ENCODE measurements at regions of chr6 and their contacts with region 1.

Region 1: GRCh38 chr6:142474531-142475289 is 172.9 kb downstream of the ADGRG6 start:
- DNase-seq: peak; percentile 77
- ATAC-seq: peak; percentile 94
- H3K4me3 ChIP-seq: peak overlapping the region in 1 of 2 experiments; percentile 19; a peak in 1 of 4 replicates
- H3K27ac ChIP-seq: 0 out of 2 replicates have a peak overlapping the region, but pooled peaks have one; percentile 10
- H3K4me1 ChIP-seq: peaks cover 0 to 9% of the 10 kb centered on the region in 2 experiments; a peak in 2 of 4 replicates
- H3K27me3 ChIP-seq: no peaks in the 10 kb centered on the region
- CTCF ChIP-seq: peak; percentile 52 to 89 (median 83)
- POLR2A ChIP-seq: no peak
- RAD21 ChIP-seq: peak; percentile 83

Region 2: GRCh38 chr6:142071981-142072380 is 402.7 kb before region 1 on chr6:
- CTCF ChIA-PET with region 1: no interaction called
- POLR2A ChIA-PET with region 1: no interaction called
- RAD21 ChIA-PET with region 1: no interaction called
- intact Hi-C with region 1: no loop called
- DNase-seq: peak; percentile 22
- ATAC-seq: peak; percentile 87
- H3K4me3 ChIP-seq: no peak overlapping the region
- H3K27ac ChIP-seq: no peak overlapping the region
- H3K4me1 ChIP-seq: no peaks in the 10 kb centered on the region
- H3K27me3 ChIP-seq: no peaks in the 10 kb centered on the region
- CTCF ChIP-seq: peak; percentile 15 to 45 (median 32); a peak in 5 of 6 replicates
- POLR2A ChIP-seq: no peak
- RAD21 ChIP-seq: peak; percentile 30

Region 3: GRCh38 chr6:142146828-142147662 is 327.7 kb before region 1 on chr6 and contains the starts of genes NMBR and VTA1:
- CTCF ChIA-PET with region 1: interaction called, 10 read pairs
- POLR2A ChIA-PET with region 1: no interaction called
- RAD21 ChIA-PET with region 1: no interaction called
- intact Hi-C with region 1: no loop called
- DNase-seq: peak; percentile 99
- ATAC-seq: peak; percentile 99
- H3K4me3 ChIP-seq: peak within 1 kb of the TSS; percentile 83
- H3K27ac ChIP-seq: peak within 1 kb of the TSS; percentile 27; the same call in 1 of the 2 replicates
- H3K4me1 ChIP-seq: peaks cover 7 to 15% of the 10 kb centered on the region in 2 experiments; a peak in 3 of 4 replicates
- H3K27me3 ChIP-seq: no peaks in the 10 kb centered on the region
- CTCF ChIP-seq: peak; percentile 82 to 89 (median 85)
- POLR2A ChIP-seq: peak; percentile 77
- RAD21 ChIP-seq: peak; percentile 91
- total RNA-seq, gene NMBR: not detected
- total RNA-seq, gene VTA1: 67.8 TPM

Region 4: DNA sequence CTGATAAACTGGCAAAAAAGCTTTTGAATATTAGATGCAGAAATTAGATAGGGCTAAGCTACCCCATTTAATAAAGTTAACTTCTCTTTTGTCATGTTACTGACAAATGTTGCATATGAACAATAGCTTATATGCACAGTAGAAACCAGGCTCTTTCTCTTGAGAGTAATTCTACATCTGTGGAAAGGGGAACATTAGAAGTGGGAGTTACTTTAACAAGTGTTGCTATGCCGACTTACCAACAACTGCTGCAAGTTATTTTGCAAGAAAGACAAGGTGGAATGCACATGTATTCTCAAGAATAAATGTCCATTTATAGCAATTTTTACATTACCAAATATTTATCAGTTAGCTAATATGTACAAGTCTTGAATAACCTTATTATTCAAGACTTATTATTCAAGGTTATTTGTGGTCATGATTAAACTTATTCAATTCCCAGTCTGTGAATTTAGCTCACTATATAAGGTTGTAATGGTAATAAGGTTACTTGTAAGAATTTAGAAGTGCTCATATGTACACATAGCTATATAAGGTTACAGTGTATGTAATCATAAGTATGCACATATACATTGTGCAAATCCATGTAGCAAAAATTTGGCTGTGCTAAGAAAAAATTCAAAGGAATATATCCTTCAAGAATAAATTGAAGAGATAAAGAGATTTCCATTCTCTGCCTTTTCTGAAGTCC is 134.6 kb before region 1 on chr6:
- CTCF ChIA-PET with region 1: no interaction called
- POLR2A ChIA-PET with region 1: no interaction called
- RAD21 ChIA-PET with region 1: no interaction called
- intact Hi-C with region 1: no loop called
- DNase-seq: no peak
- ATAC-seq: no peak
- H3K4me3 ChIP-seq: no peak overlapping the region
- H3K27ac ChIP-seq: no peak overlapping the region
- H3K4me1 ChIP-seq: no peaks in the 10 kb centered on the region
- H3K27me3 ChIP-seq: no peaks in the 10 kb centered on the region
- CTCF ChIP-seq: no peak
- POLR2A ChIP-seq: no peak
- RAD21 ChIP-seq: no peak

Region 5: GRCh38 chr6:142500250-142500786 is 25.6 kb after region 1 on chr6:
- CTCF ChIA-PET with region 1: interaction called, 10 read pairs
- POLR2A ChIA-PET with region 1: no interaction called
- RAD21 ChIA-PET with region 1: no interaction called
- intact Hi-C with region 1: no loop called
- DNase-seq: no peak
- ATAC-seq: no peak
- H3K4me3 ChIP-seq: no peak overlapping the region
- H3K27ac ChIP-seq: no peak overlapping the region
- H3K4me1 ChIP-seq: no peaks in the 10 kb centered on the region
- H3K27me3 ChIP-seq: no peaks in the 10 kb centered on the region
- CTCF ChIP-seq: no peak
- POLR2A ChIP-seq: no peak
- RAD21 ChIP-seq: no peak

Region 6: DNA sequence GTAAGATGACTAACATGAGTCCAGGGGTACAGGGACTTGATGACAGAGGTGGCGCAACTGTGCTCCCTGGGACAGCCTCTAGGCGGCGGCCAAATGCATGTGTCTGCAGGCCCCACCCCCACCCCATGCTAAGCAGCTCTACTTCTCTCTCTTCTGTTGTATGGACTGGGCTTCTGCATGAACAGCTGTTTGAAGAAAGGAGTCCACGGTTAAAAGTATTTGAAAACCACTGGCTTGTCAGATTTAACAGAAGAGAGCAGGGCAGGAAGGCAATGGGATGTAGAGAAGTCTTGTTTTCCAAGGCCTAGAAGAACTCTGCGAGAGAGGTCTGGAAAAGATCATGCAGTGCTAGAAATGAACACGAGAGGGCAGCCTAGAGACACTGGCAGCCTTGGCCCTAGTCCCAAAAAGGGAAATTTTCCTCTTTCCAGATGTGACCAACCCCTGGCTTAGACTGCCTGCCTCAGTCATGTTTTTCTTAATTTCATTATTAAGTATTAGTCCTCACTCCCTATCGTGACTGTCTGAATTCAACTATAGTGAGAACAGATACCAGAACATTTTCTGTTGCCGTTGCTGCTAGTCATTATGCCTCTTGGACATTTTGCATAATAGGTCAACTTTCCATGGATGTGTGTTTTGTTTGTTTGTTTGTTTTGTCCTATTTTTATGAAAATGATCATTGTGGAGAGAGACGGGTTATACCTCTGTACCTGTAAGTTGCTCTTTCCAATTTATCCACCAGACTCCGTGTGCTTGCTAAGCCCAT is 92.1 kb after region 1 on chr6:
- CTCF ChIA-PET with region 1: interaction called, 16 read pairs
- POLR2A ChIA-PET with region 1: no interaction called
- RAD21 ChIA-PET with region 1: no interaction called
- intact Hi-C with region 1: loop called (anchors 2 kb)
- DNase-seq: peak; percentile 66
- ATAC-seq: peak; percentile 86
- H3K4me3 ChIP-seq: no peak overlapping the region
- H3K27ac ChIP-seq: no peak overlapping the region
- H3K4me1 ChIP-seq: peaks cover 2 to 21% of the 10 kb centered on the region in 2 experiments; a peak in 3 of 4 replicates
- H3K27me3 ChIP-seq: no peaks in the 10 kb centered on the region
- CTCF ChIP-seq: peak; percentile 78 to 87 (median 81)
- POLR2A ChIP-seq: no peak
- RAD21 ChIP-seq: peak; percentile 76

Region 7: GRCh38 chr6:143026696-143027449 is 552.2 kb after region 1 on chr6:
- CTCF ChIA-PET with region 1: interaction called, 10 read pairs
- POLR2A ChIA-PET with region 1: no interaction called
- RAD21 ChIA-PET with region 1: no interaction called
- intact Hi-C with region 1: loop called (anchors 10 kb)
- DNase-seq: peak; percentile 7
- ATAC-seq: peak; percentile 83
- H3K4me3 ChIP-seq: no peak overlapping the region
- H3K27ac ChIP-seq: no peak overlapping the region
- H3K4me1 ChIP-seq: no peaks in the 10 kb centered on the region
- H3K27me3 ChIP-seq: no peaks in the 10 kb centered on the region
- CTCF ChIP-seq: peak; percentile 60 to 70 (median 67); a peak in 5 of 6 replicates
- POLR2A ChIP-seq: no peak
- RAD21 ChIP-seq: peak; percentile 77

Region 8: GRCh38 chr6:143427109-143427817 is 952.6 kb after region 1 on chr6:
- CTCF ChIA-PET with region 1: interaction called, 43 read pairs
- POLR2A ChIA-PET with region 1: no interaction called
- RAD21 ChIA-PET with region 1: interaction called in 1 of 2 experiments, 3 read pairs
- intact Hi-C with region 1: loop called (anchors 1 kb)
- DNase-seq: no peak
- ATAC-seq: peak; percentile 99
- H3K4me3 ChIP-seq: no peak overlapping the region
- H3K27ac ChIP-seq: no peak overlapping the region
- H3K4me1 ChIP-seq: no peaks in the 10 kb centered on the region
- H3K27me3 ChIP-seq: no peaks in the 10 kb centered on the region
- CTCF ChIP-seq: peak; percentile 71 to 98 (median 95)
- POLR2A ChIP-seq: no peak
- RAD21 ChIP-seq: peak; percentile 92